Vagina (tissue), 2 donors: ENCODE measurements at regions of chr15 and their contacts with region 1.

Region 1: DNA sequence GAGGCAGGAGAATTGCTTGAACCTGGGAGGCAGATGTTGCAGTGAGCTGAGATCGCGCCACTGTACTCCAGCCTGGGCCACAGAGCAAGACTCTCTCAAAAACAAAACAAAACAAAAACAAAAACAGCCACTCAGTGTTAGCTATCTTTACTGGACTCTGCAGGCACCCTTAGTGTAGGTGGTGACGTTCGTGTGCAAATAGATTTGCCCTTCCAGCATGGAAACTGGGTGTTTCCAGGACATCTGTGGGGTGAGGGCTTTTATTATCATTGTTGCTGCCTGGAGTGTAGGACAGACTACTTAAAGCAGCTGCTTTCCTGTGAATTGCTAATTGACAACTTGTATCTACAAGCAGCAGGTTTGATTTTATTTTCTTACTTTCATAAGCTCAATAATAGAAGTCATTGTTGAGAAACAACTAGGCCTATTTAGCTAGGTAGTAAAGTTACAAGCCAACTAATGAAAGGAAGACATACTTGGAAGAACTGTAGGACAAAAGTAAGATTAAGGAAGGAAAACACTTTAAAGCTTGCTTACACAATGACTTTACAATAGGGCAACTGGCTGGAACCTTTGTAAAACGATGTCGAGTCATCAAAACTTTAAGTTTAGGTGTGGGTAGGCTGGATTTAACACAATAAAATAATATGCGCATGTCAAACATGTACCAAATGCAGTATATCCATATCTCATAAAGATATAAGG is 25.4 kb upstream of the SPPL2A start:
- DNase-seq: no peak
- H3K4me3 ChIP-seq: no peak overlapping the region
- H3K27ac ChIP-seq: no peak overlapping the region
- H3K4me1 ChIP-seq: no peaks in the 10 kb centered on the region
- H3K27me3 ChIP-seq: no peaks in the 10 kb centered on the region
- CTCF ChIP-seq: no peak
- POLR2A ChIP-seq: no peak

Region 2: GRCh38 chr15:50176869-50177268 is 614.1 kb before region 1 on chr15:
- intact Hi-C with region 1: no loop called
- DNase-seq: no peak
- H3K4me3 ChIP-seq: no peak overlapping the region
- H3K27ac ChIP-seq: no peak overlapping the region
- H3K4me1 ChIP-seq: peaks cover 3% of the 10 kb centered on the region
- H3K27me3 ChIP-seq: peaks cover under 1% of the 10 kb centered on the region
- CTCF ChIP-seq: no peak
- POLR2A ChIP-seq: no peak

Region 3: DNA sequence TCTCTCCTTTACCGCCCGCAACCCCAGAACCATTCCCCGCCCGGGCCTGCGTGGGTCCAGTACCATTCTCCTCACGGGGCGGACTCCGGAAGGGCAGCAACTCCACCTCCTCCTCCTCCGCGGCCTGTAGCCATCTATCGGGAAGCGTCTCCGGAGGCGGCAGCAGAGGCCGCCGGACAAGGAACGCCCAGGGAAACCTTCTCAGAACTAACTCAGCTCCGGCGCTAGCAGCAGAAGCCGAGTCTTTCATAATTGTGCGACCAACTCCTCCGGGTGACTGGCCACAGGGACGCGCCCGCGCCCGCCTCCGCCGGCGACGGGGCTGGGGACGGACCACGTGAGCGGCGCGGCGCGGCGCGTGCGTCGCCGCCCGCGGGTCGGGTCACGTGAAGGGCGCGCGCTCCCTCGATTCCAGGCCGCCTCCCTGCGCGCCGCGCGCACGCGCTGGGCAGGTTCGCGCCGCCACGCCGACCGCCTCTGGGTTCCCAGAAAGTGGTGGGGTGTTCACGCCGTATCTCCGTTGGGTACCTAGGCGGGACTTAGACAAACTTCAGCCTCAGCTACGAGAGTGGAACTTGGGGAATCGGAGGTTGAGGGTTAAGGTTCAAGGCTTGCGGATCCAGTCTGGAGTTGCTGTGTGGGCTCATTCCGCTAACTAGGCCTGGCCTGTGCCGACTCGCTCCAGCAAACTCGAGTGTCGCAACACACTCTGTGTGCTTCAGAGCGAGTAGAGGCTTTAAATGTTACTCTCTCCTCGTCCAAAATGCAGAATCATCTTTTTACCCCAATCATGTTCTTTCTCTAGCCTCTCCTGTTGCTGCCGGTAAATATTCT is 104.2 kb before region 1 on chr15 and contains the start of gene TRPM7:
- intact Hi-C with region 1: no loop called
- DNase-seq: peak; percentile 94 to 96
- H3K4me3 ChIP-seq: peak within 1 kb of the TSS; percentile 83 to 87
- H3K27ac ChIP-seq: peak within 1 kb of the TSS; percentile 96
- H3K4me1 ChIP-seq: peaks cover 42% of the 10 kb centered on the region
- H3K27me3 ChIP-seq: no peaks in the 10 kb centered on the region
- CTCF ChIP-seq: no peak
- POLR2A ChIP-seq: peak in 1 of 2 donors; percentile 80
- total RNA-seq, gene TRPM7: 53.3 TPM

Region 4: GRCh38 chr15:52338058-52338457 is 1547.1 kb after region 1 on chr15:
- intact Hi-C with region 1: no loop called
- DNase-seq: no peak
- H3K4me3 ChIP-seq: no peak overlapping the region
- H3K27ac ChIP-seq: no peak overlapping the region
- H3K4me1 ChIP-seq: no peaks in the 10 kb centered on the region
- H3K27me3 ChIP-seq: no peaks in the 10 kb centered on the region
- CTCF ChIP-seq: no peak
- POLR2A ChIP-seq: no peak

Region 5: GRCh38 chr15:52772766-52773165 is 1981.8 kb after region 1 on chr15:
- intact Hi-C with region 1: loop called (anchors 5 kb)
- DNase-seq: no peak
- H3K4me3 ChIP-seq: no peak overlapping the region
- H3K27ac ChIP-seq: no peak overlapping the region
- H3K4me1 ChIP-seq: no peaks in the 10 kb centered on the region
- H3K27me3 ChIP-seq: no peaks in the 10 kb centered on the region
- CTCF ChIP-seq: no peak
- POLR2A ChIP-seq: no peak